GM10248 (cell line): ENCODE measurements at regions of chr12 and their contacts with region 1.

Region 1: GRCh38 chr12:98593351-98594049 is at the start of gene SLC25A3:
- DNase-seq: peak; percentile 98
- CTCF ChIP-seq: no peak

Region 2: DNA sequence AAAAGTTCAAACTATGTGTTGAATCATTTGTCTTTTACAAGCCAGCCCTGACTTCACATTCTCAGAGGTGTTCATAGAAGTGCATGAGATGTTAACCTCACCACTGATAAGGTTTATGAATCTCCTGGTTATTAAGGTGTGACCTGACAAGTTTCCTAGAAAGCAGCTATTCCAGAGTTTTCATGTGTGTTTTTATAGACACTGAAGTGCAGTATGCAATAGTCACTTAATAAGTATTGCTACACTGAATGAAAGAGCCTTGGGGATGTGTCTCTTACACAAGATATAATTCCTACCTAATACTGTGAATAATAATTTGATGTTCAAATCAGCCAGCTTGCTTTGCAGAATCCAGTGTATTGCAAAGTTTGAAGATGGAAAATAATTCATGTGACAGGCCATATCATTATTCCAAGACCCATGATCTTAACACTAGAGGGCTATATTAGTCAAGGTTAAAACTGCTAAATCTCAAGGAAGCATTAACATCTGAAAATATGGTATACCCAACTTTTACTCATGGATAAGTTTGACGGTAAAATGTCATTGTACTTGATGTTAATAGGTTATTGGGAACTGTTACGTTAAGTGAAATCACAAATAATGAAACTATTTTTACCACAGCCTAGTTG is 13.0 kb after region 1 on chr12:
- CTCF ChIA-PET with region 1: interaction called, 4 read pairs
- POLR2A ChIA-PET with region 1: interaction called, 27 read pairs
- DNase-seq: no peak
- CTCF ChIP-seq: peak; percentile 22

Region 3: DNA sequence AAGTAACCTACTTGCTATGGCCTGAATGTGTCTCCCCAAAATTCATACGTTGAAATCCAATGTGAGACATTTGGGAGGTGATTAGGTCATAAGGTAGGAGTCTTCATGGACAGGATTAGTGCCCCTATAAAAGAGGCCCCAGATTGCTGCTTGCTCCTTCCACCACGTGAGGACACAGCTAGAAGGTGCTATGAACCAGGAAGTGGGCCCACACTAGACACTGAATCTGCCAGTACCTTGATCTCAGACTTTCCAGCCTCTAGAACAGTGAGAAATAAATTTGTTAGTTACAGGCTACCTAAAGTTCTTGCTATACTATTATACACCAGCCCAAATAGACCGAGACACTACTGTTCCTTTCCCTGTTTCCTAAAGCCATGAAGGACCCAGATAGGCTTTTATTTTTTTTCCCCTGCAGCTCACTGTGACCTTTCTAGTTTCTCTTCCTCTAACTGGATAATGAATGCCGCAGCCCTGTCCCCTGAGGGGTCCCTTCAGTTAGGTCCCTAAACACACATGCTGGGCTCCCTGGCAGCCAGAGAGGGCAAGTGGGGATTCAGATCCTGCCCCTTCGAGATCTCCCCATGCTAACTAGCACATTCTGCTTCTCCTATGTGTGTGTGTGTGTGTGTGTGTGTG is 19.3 kb after region 1 on chr12:
- CTCF ChIA-PET with region 1: interaction called, 4 read pairs
- POLR2A ChIA-PET with region 1: interaction called, 10 read pairs
- DNase-seq: peak; percentile 50
- CTCF ChIP-seq: no peak